Ascending aorta (tissue), 2 donors: ENCODE measurements at regions of chr14 and their contacts with region 1.

Region 1: GRCh38 chr14:74612350-74613021 is 449 bp upstream of the LTBP2 start:
- DNase-seq: peak in 1 of 2 donors; percentile 92
- H3K4me3 ChIP-seq: peak overlapping the region; percentile 53 to 96
- H3K27ac ChIP-seq: peak overlapping the region; percentile 93 to 97
- H3K4me1 ChIP-seq: peaks cover 20 to 47% of the 10 kb centered on the region in 2 donors
- H3K27me3 ChIP-seq: no peaks in the 10 kb centered on the region
- CTCF ChIP-seq: peak; percentile 61 to 98 (median 69)

Region 2: DNA sequence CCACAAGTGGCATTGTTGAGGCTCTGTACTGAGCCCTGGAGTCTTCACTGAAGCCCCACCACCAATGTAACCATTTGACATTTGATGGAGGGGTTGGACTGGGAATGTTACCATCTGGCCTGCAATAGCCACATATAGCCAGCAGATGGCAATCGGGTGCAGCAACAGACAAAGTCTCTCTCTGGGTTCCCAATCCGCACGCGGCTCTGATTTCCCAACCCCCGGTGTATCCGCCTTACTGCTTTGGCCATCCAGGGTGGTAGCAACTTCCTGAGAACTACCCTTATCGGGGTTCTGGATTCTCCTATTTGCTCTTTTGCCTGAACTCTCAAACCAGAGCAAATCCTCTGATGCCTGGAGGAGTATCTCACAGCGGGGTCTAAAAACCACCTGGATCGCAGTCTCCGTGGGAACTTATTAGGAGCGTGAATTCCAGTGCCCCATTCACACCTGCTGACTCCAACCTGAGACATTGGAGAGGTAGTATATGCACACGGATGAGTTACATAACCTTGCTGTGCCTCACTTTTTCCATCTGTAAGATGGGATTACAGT is 250.0 kb before region 1 on chr14:
- intact Hi-C with region 1: loop called (anchors 10 kb)
- DNase-seq: peak in 1 of 2 donors; percentile 88
- H3K4me3 ChIP-seq: no peak overlapping the region
- H3K27ac ChIP-seq: no peak overlapping the region
- H3K4me1 ChIP-seq: no peaks in the 10 kb centered on the region
- H3K27me3 ChIP-seq: no peaks in the 10 kb centered on the region
- CTCF ChIP-seq: peak; percentile 93 to 95 (median 94)

Region 3: DNA sequence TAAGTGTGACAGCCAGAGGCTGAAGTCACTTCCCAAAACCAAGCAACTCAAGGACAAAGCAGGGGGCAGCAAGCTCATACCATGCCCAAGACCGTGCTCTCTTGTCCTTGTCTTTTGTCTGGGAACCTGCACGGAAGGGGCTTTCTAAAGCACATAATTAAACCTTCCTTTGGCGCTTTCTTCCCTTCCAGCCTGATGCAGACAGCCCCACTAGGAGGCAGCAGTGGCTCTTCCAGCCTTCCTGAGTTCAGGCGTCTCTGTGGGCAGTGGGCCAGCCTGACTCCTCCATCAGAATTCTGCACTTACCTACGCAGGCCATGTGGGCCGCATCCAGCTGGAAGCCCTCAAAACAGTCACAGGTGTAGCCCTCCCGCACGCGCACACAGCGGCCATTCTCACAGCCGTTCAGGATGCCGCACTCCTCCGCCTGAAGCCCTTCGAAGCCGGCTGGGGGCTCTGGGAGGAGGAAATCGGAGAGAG is 111.3 kb before region 1 on chr14:
- intact Hi-C with region 1: loop called (anchors 1 kb)
- DNase-seq: peak in 1 of 2 donors; percentile 82
- H3K4me3 ChIP-seq: no peak overlapping the region
- H3K27ac ChIP-seq: peak overlapping the region; percentile 37 to 55
- H3K4me1 ChIP-seq: no peaks in the 10 kb centered on the region
- H3K27me3 ChIP-seq: no peaks in the 10 kb centered on the region
- CTCF ChIP-seq: peak; percentile 31 to 68 (median 59)

Region 4: DNA sequence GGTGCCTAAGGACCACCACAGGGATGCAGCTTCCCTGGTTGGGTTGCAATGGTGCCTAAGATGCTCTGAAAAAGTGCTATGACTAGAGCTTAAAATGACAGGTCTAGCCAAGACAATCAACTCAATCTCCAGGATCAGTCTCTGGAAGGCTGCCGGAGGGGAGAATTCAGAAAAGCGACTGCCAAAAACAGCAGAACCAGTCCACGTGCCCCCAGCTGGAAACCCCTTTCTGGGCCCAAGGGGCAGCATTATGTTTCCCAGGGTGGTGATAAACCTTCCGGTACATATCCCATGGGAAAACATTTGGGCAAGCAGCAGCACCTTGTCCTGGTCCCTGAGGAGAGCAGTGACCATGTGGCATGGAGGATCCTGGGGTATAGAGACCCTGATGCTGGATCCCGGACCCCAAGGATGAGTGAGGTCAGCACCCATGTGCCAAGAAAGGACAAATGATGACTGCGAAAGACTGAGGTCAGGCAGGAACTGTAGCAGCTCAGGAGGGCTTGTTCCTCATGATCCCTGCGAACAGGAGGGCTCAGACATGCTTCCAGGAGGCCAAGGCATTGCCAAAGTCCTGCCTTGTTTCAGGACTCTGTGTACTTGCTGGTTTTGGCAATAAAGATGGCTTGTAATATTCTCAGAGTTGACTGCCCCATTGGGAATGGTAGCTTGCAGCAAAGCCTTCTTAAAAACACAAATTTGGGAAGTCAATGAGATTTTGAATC is 49.4 kb after region 1 on chr14:
- intact Hi-C with region 1: loop called (anchors 1 kb)
- DNase-seq: peak; percentile 58 to 84
- H3K4me3 ChIP-seq: no peak overlapping the region
- H3K27ac ChIP-seq: peak overlapping the region; percentile 88 to 95
- H3K4me1 ChIP-seq: peaks cover 27 to 49% of the 10 kb centered on the region in 2 donors
- H3K27me3 ChIP-seq: no peaks in the 10 kb centered on the region
- CTCF ChIP-seq: no peak

Region 5: DNA sequence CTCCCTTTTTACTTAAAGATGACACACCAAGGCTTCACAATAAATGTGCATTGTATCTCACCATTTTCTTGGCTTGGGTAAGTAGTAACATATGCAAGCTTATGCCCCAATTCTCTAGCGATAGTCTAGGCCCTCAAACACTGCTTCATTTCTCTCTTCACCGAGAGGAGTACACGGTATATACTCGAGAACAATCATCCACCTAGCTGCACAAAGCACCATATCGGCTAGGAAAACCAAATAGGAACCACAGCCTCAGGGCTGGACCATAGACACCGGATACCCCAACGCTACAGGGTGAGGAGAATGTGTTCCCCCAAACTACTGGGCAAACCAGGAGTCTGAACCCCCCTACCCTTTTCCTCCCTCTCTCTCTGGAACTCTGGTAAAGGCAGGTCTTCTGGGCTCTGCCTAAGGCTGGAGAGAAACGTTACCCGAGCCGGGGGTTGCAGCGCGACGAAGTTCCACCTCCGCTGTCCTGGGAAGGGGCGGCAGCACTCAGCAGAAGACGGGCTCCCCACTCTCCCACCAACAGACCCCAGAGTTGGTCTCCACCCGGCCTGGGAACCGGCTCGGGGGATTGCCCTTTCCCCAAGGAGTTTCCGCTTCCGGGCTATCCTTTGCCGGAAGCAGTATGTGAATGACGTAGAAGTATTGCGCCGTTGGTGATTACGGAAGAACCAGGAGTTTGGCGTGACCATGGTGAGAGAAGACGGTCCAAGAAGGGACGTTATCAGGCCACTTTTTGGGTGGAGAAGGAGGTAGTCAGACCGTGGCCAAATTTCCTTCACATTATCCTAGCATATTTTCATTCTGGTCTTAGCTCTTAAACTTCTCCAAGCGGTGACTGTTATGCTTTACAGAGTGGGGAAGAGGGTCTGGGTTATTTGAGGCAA is 100.3 kb after region 1 on chr14 and contains the starts of genes AREL1 and FCF1:
- intact Hi-C with region 1: loop called (anchors 1 kb)
- DNase-seq: peak; percentile 33 to 92
- H3K4me3 ChIP-seq: peak within 1 kb of the TSS; percentile 79 to 80
- H3K27ac ChIP-seq: peak within 1 kb of the TSS; percentile 69 to 88
- H3K4me1 ChIP-seq: peaks cover 0 to 13% of the 10 kb centered on the region in 2 donors
- H3K27me3 ChIP-seq: no peaks in the 10 kb centered on the region
- CTCF ChIP-seq: no peak
- total RNA-seq, gene AREL1: 17.9 TPM
- total RNA-seq, gene FCF1: 10.0 TPM

Region 6: DNA sequence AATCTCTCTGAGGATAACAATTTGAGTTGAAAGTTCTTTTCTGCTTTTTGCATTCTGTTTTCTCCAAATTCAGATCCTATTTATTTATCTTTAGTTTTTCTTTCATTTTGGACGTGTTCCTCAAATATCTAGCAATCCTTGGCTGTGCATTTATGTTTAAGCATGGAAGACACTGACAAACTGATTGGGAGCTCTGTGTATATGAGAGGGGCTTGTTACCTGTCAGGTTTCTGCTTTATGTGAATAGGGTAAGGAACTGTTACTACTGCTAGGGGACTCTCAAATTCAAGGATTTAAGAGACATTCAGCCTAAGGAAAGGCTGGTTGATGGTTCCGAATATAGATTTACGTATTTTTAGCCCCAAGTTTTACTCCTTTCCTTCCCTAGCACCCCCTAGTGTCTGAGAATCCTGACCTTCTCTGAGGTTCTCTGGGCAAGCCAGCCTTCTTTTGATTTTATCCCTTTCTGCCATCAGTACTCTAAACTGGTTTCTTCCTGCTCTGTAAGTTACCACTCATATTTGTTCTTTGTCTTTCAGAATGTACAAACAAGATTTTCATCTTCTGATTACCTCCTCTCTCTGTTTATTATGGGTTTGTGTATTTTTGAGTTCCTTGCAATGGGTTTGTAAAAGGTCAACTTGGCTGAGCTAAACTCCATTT is 181.2 kb after region 1 on chr14:
- intact Hi-C with region 1: loop called (anchors 2 kb)
- DNase-seq: no peak
- H3K4me3 ChIP-seq: no peak overlapping the region
- H3K27ac ChIP-seq: no peak overlapping the region
- H3K4me1 ChIP-seq: peaks cover 0 to 6% of the 10 kb centered on the region in 2 donors
- H3K27me3 ChIP-seq: no peaks in the 10 kb centered on the region
- CTCF ChIP-seq: peak in 2 of 3 experiments; percentile 24 to 46